GM12878 (cell line): ENCODE measurements at regions of chr10 and their contacts with region 1.

Region 1: GRCh38 chr10:50508315-50509051 is 115.3 kb downstream of the SGMS1 start:
- DNase-seq: peak; percentile 99
- ATAC-seq: peak; percentile 75
- H3K4me3 ChIP-seq: peak overlapping the region; percentile 4; the same call in 1 of the 2 replicates
- H3K27ac ChIP-seq: peak overlapping the region; percentile 80
- H3K4me1 ChIP-seq: peaks cover 68% of the 10 kb centered on the region
- H3K27me3 ChIP-seq: no peaks in the 10 kb centered on the region
- CTCF ChIP-seq: no peak
- EP300 ChIP-seq: peak; percentile 99 to 100
- POLR2A ChIP-seq: no peak
- RAD21 ChIP-seq: peak; percentile 27; the same call in 1 of the 2 replicates

Region 2: DNA sequence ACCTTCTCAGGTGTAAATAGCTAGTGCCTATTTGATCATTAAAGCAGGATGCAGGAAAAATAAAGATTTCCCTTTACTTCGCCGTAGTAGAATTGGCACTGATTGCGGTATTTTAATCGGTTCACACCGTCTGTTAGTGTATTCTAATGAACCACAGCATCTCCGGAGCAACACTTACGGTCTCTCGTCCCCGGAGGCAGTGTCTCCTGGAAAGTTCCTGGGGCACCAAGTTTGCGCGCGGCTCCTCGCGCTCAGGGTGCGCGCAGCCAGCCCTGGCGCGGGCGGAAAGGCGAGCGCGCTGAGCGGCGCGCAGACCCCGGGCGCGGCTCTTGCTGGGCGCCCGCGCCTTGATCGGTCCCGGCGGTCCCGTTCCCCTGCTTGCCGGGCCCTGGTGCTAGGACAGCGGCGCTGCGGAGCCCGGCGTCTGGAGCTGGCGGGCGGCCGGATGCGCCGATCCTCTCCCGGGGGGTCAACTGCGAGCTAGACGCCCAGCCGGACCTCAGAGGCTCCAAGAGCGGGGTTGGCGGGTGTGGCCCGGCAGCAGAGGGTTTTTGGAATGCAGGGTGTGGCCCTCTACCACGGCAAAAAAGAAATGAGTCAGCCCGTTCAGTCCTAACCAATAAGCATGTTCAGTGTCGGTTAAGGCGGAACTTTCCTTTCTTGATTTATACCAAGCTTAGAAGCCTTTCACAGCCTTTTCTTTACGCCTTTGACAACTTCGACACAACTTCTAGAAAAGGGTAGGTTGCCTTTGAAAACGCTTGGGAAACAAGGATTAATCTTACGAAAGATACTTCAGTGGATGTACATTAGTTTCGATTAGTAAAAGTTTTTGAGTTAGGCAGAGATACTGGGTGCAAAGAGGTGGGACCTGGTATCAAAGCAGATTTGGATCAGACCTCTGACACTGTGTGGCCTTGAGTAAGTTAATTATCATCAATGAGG is 90.3 kb before region 1 on chr10:
- CTCF ChIA-PET with region 1: interaction called, 23 read pairs
- POLR2A ChIA-PET with region 1: interaction called, 8 read pairs
- RAD21 ChIA-PET with region 1: interaction called, 32 read pairs
- SMC1A ChIA-PET with region 1: interaction called, 78 read pairs
- in situ Hi-C with region 1: no loop called
- intact Hi-C with region 1: no loop called
- DNase-seq: peak; percentile 63
- ATAC-seq: peak; percentile 84
- H3K4me3 ChIP-seq: peak overlapping the region; percentile 64
- H3K27ac ChIP-seq: peak overlapping the region; percentile 79
- H3K4me1 ChIP-seq: peaks cover 28% of the 10 kb centered on the region
- H3K27me3 ChIP-seq: no peaks in the 10 kb centered on the region
- CTCF ChIP-seq: peak in 1 of 3 experiments; percentile 17; a peak in 1 of 6 replicates
- EP300 ChIP-seq: peak in 1 of 2 experiments; percentile 34; a peak in 1 of 4 replicates
- POLR2A ChIP-seq: peak; percentile 77
- RAD21 ChIP-seq: no peak

Region 3: DNA sequence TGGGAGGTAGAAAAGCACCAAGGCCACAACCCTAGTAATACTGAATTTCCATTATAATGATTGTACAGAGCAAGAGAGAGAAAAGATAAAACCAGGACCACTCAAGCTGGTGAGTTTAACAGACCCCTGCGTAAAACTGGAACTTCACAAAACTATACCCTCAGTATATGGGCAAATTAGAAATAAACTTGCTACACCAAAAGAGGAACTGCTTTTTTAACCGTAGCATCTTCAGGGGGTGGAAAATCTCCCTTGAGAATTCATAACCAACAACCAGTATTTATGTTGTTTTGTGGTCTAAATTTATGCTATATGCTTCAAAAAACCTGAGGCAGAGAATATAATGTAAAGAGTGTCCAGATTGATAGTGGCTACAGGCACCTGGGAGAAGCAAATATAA is 55.9 kb before region 1 on chr10:
- CTCF ChIA-PET with region 1: interaction called, 6 read pairs
- POLR2A ChIA-PET with region 1: interaction called, 6 read pairs
- RAD21 ChIA-PET with region 1: interaction called, 28 read pairs
- SMC1A ChIA-PET with region 1: interaction called, 46 read pairs
- in situ Hi-C with region 1: no loop called
- intact Hi-C with region 1: loop called (anchors 1 kb)
- DNase-seq: no peak
- ATAC-seq: peak; percentile 57
- H3K4me3 ChIP-seq: peak overlapping the region; percentile 7; the same call in 1 of the 2 replicates
- H3K27ac ChIP-seq: peak overlapping the region; percentile 77
- H3K4me1 ChIP-seq: peaks cover 42% of the 10 kb centered on the region
- H3K27me3 ChIP-seq: no peaks in the 10 kb centered on the region
- CTCF ChIP-seq: no peak
- EP300 ChIP-seq: peak; percentile 65 to 67; a peak in 2 of 4 replicates
- POLR2A ChIP-seq: no peak
- RAD21 ChIP-seq: no peak

Region 4: GRCh38 chr10:50490241-50490640 is 18.2 kb before region 1 on chr10:
- CTCF ChIA-PET with region 1: no interaction called
- POLR2A ChIA-PET with region 1: interaction called, 24 read pairs
- RAD21 ChIA-PET with region 1: interaction called, 5 read pairs
- SMC1A ChIA-PET with region 1: interaction called, 29 read pairs
- in situ Hi-C with region 1: no loop called
- intact Hi-C with region 1: no loop called
- DNase-seq: no peak
- ATAC-seq: no peak
- H3K4me3 ChIP-seq: no peak overlapping the region
- H3K27ac ChIP-seq: no peak overlapping the region
- H3K4me1 ChIP-seq: no peaks in the 10 kb centered on the region
- H3K27me3 ChIP-seq: no peaks in the 10 kb centered on the region
- CTCF ChIP-seq: no peak
- EP300 ChIP-seq: no peak
- POLR2A ChIP-seq: no peak
- RAD21 ChIP-seq: no peak

Region 5: DNA sequence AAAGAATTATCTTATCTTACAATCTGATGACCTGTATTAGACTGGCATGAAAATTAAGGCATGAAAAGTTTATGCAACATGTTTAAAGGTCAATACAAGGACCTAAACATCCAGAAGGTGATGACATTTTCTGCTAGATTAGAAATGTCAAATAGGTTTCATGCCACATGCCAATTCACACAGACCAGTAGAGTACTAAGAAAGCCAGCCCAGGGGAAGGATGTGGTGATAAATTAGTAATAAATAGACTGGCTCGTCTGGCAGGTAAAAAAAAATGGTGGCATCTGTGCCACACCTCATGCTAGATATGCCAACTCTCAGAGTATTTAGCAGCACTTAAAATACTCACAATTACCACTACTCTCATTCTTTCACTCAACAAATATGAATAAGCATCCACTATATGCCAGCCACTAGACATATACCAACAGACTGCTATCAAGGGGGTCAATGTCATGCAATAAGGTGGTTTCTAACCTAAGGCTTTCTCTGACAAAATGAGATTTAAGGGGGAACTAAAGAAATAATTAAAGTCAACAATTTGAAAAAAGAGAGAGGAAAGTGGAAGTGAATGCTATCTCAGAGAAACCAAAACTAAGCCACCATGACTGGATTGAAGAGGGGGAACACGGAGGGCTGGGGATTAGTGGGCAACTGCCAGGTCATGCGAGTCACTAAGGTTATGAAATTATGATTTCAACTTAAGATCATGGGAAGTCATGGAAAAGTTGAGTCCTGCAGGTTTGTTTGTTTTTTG is 31.8 kb after region 1 on chr10:
- CTCF ChIA-PET with region 1: interaction called, 23 read pairs
- POLR2A ChIA-PET with region 1: interaction called, 24 read pairs
- RAD21 ChIA-PET with region 1: interaction called, 32 read pairs
- SMC1A ChIA-PET with region 1: interaction called, 50 read pairs
- in situ Hi-C with region 1: no loop called
- intact Hi-C with region 1: loop called (anchors 2 kb)
- DNase-seq: no peak
- ATAC-seq: peak; percentile 72
- H3K4me3 ChIP-seq: peak overlapping the region; percentile 42; the same call in 1 of the 2 replicates
- H3K27ac ChIP-seq: peak overlapping the region; percentile 86
- H3K4me1 ChIP-seq: peaks cover 51% of the 10 kb centered on the region
- H3K27me3 ChIP-seq: no peaks in the 10 kb centered on the region
- CTCF ChIP-seq: no peak
- EP300 ChIP-seq: peak in 1 of 2 experiments; percentile 36; a peak in 2 of 4 replicates
- POLR2A ChIP-seq: no peak
- RAD21 ChIP-seq: no peak

Region 6: GRCh38 chr10:50653142-50653541 is 144.7 kb after region 1 on chr10:
- CTCF ChIA-PET with region 1: no interaction called
- POLR2A ChIA-PET with region 1: interaction called, 3 read pairs
- RAD21 ChIA-PET with region 1: interaction called, 10 read pairs
- SMC1A ChIA-PET with region 1: interaction called, 8 read pairs
- in situ Hi-C with region 1: no loop called
- intact Hi-C with region 1: no loop called
- DNase-seq: no peak
- ATAC-seq: peak; percentile 27
- H3K4me3 ChIP-seq: no peak overlapping the region
- H3K27ac ChIP-seq: no peak overlapping the region
- H3K4me1 ChIP-seq: peaks cover 28% of the 10 kb centered on the region
- H3K27me3 ChIP-seq: no peaks in the 10 kb centered on the region
- CTCF ChIP-seq: peak; percentile 16 to 66 (median 53); a peak in 4 of 6 replicates
- EP300 ChIP-seq: no peak
- POLR2A ChIP-seq: no peak
- RAD21 ChIP-seq: peak; percentile 45